Sciatic nerve (tissue), 2 donors: ENCODE measurements at regions of chr6 and their contacts with region 1.

Region 1: DNA sequence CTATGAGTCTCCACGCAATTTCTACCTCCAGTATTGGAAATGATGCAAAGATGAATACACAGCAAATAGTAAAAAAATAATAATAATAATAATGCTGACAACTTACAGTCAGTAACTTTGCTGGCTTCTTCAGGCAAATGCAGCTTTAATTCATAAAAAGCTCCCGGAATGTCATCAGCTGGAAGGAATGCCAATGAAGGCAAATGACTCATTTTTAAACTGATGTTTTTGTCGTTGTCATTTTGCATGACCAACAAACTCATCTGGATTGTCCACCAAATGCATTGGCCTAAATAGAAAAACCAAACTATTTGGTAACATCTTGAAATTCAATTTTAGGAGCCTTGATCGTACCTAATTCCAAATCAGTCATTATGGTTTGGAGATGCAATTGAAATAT is 217.1 kb downstream of the ALDH8A1 start:
- DNase-seq: no peak
- ATAC-seq: no peak

Region 2: GRCh38 chr6:133923938-133924593 is 808.7 kb before region 1 on chr6:
- intact Hi-C with region 1: no loop called
- DNase-seq: peak; percentile 70
- ATAC-seq: peak; percentile 93

Region 3: GRCh38 chr6:134720353-134721059 is 12.3 kb before region 1 on chr6:
- intact Hi-C with region 1: loop called (anchors 1 kb)
- DNase-seq: no peak
- ATAC-seq: peak; percentile 43